ENCODE measurements at regions of chr5 and their contacts with region 1.

Region 1: GRCh38 chr5:133944263-133945185 is 23.9 kb downstream of the C5orf15 start:
- DNase-seq: peak; percentile 44
- H3K4me3 ChIP-seq: no peak overlapping the region
- H3K27ac ChIP-seq: no peak overlapping the region
- H3K4me1 ChIP-seq: no peaks in the 10 kb centered on the region
- H3K27me3 ChIP-seq: no peaks in the 10 kb centered on the region
- CTCF ChIP-seq: peak; percentile 71 to 82

Region 2: GRCh38 chr5:133489632-133490031 is 454.9 kb before region 1 on chr5:
- CTCF ChIA-PET with region 1: no interaction called
- dilution Hi-C with region 1: no loop called
- in situ Hi-C with region 1: no loop called
- intact Hi-C with region 1: loop called (anchors 1 kb)
- DNase-seq: peak; percentile 37
- H3K4me3 ChIP-seq: no peak overlapping the region
- H3K27ac ChIP-seq: no peak overlapping the region
- H3K4me1 ChIP-seq: no peaks in the 10 kb centered on the region
- H3K27me3 ChIP-seq: no peaks in the 10 kb centered on the region
- CTCF ChIP-seq: peak in 1 of 2 donors; percentile 52

Region 3: GRCh38 chr5:133552931-133553525 is 391.5 kb before region 1 on chr5:
- CTCF ChIA-PET with region 1: no interaction called
- dilution Hi-C with region 1: no loop called
- in situ Hi-C with region 1: no loop called
- intact Hi-C with region 1: loop called (anchors 1 kb)
- DNase-seq: peak; percentile 47
- H3K4me3 ChIP-seq: no peak overlapping the region
- H3K27ac ChIP-seq: no peak overlapping the region
- H3K4me1 ChIP-seq: no peaks in the 10 kb centered on the region
- H3K27me3 ChIP-seq: no peaks in the 10 kb centered on the region
- CTCF ChIP-seq: peak; percentile 77 to 81

Region 4: GRCh38 chr5:133698646-133699526 is 245.6 kb before region 1 on chr5:
- CTCF ChIA-PET with region 1: no interaction called
- dilution Hi-C with region 1: loop called (anchors 10 kb)
- in situ Hi-C with region 1: no loop called
- intact Hi-C with region 1: no loop called
- DNase-seq: no peak
- H3K4me3 ChIP-seq: no peak overlapping the region
- H3K27ac ChIP-seq: no peak overlapping the region
- H3K4me1 ChIP-seq: no peaks in the 10 kb centered on the region
- H3K27me3 ChIP-seq: no peaks in the 10 kb centered on the region
- CTCF ChIP-seq: no peak

Region 5: GRCh38 chr5:133910571-133910970 is 34.0 kb before region 1 on chr5:
- CTCF ChIA-PET with region 1: no interaction called
- dilution Hi-C with region 1: loop called (anchors 5 kb)
- in situ Hi-C with region 1: no loop called
- intact Hi-C with region 1: no loop called
- DNase-seq: no peak
- H3K4me3 ChIP-seq: no peak overlapping the region
- H3K27ac ChIP-seq: no peak overlapping the region
- H3K4me1 ChIP-seq: no peaks in the 10 kb centered on the region
- H3K27me3 ChIP-seq: no peaks in the 10 kb centered on the region
- CTCF ChIP-seq: no peak

Region 6: GRCh38 chr5:134063188-134063820 is 118.8 kb after region 1 on chr5:
- CTCF ChIA-PET with region 1: no interaction called
- dilution Hi-C with region 1: no loop called
- in situ Hi-C with region 1: no loop called
- intact Hi-C with region 1: no loop called
- DNase-seq: peak; percentile 27
- H3K4me3 ChIP-seq: no peak overlapping the region
- H3K27ac ChIP-seq: no peak overlapping the region
- H3K4me1 ChIP-seq: peaks cover 26% of the 10 kb centered on the region
- H3K27me3 ChIP-seq: no peaks in the 10 kb centered on the region
- CTCF ChIP-seq: no peak